ENCODE measurements at regions of chr9 and their contacts with region 1.

Region 1: DNA sequence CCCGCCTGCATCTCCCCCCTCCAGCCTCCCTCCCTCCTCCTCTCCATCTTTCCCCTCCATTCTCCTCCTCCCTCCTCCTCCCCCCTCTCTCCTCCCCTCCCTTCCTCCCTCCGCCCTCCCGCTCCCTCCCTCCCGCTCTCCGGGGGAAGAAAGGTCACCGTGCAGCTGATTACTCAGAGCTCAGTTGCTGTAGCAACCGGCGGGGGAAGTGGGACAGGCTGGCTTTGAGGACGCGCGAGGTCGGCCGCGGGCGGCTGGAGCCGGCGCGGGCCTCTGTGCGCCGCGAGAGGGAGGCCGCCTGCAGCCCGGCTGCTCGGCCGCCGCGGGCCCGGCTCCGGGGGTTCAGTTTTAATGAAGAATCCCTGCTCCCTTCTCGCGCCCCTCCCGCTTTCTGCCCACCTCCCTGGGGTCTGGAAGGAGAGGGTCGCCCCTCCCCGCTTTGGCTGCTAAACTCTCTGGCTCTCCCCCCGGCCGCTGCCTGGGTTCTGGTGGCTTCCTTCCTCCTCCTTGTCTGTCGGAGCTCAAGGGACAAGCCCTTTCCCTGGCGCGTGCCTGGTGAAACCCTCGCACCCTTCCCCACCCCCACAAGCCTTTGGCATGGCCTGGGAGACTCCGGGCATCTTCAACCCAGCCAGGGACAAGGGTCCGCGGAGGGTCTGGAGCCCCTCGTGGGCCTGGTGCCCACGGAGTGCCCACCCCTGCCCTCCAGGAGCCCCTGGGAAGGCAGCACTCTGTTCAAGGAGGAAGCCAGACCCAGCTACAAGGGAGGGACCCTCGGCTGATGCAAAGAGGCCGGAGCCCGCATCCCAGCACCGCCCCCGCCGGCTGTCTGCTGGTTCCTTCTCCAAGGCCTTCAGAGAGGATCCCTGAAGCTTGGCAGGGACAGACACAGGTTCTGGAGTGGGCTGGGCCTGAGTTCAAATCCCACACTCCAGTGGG is 160.3 kb downstream of the C9orf50 start:
- DNase-seq: peak; percentile 80 to 94 (median 84)
- H3K4me3 ChIP-seq: peak overlapping the region in 1 of 2 donors; percentile 47
- H3K4me3 Mint-ChIP-seq: peak overlapping the region; percentile 68 to 81 (median 76)
- H3K27ac ChIP-seq: peak overlapping the region; percentile 84
- H3K27ac Mint-ChIP-seq: peak overlapping the region; percentile 87 to 96 (median 93)
- H3K4me1 ChIP-seq: peaks cover 54% of the 10 kb centered on the region
- H3K4me1 Mint-ChIP-seq: peaks cover 29 to 53% (median 42%) of the 10 kb centered on the region in 4 donors
- H3K27me3 ChIP-seq: no peaks in the 10 kb centered on the region
- H3K27me3 Mint-ChIP-seq: no peaks in the 10 kb centered on the region

Region 2: GRCh38 chr9:129208207-129209032 is 252.2 kb before region 1 on chr9:
- CTCF ChIA-PET with region 1: no interaction called
- POLR2A ChIA-PET with region 1: no interaction called
- intact Hi-C with region 1: no loop called
- DNase-seq: no peak
- H3K4me3 ChIP-seq: no peak overlapping the region
- H3K4me3 Mint-ChIP-seq: peak overlapping the region in 5 of 8 donors; percentile 11 to 46 (median 20)
- H3K27ac ChIP-seq: no peak overlapping the region
- H3K27ac Mint-ChIP-seq: peak overlapping the region in 1 of 7 donors; percentile 32
- H3K4me1 ChIP-seq: peaks cover 30% of the 10 kb centered on the region
- H3K4me1 Mint-ChIP-seq: peaks cover 13 to 31% (median 19%) of the 10 kb centered on the region in 4 donors
- H3K27me3 ChIP-seq: no peaks in the 10 kb centered on the region
- H3K27me3 Mint-ChIP-seq: no peaks in the 10 kb centered on the region

Region 3: DNA sequence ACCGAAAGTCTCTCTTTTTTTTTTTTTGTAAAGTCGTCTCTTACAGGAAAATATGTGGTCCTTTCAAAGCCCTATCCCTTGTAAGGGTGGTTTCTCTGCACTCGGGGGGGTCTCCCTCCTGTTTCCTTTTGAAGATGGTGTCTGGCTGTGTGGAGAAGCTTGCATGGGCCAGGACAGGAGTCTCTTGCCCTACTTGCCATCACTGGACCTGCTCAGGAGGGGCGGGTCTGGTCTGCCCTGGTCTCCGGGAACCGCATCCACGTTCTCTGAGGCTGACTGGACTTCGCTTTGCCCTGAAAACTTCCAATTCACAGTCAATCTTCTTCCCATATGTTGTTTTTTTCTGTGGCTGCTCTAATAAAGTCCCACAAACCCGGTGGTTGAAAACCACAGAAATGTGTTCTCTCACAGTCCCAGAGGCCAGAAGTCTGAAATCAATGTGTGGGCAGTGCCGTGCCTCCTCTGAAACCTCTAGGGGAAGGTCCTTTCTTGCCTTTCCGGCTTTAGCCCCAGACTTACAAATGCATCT is 189.6 kb before region 1 on chr9:
- CTCF ChIA-PET with region 1: no interaction called
- POLR2A ChIA-PET with region 1: no interaction called
- intact Hi-C with region 1: no loop called
- DNase-seq: no peak
- H3K4me3 ChIP-seq: peak overlapping the region in 1 of 2 donors; percentile 15
- H3K4me3 Mint-ChIP-seq: peak overlapping the region; percentile 53 to 80 (median 68)
- H3K27ac ChIP-seq: no peak overlapping the region
- H3K27ac Mint-ChIP-seq: peak overlapping the region; percentile 14 to 81 (median 65)
- H3K4me1 ChIP-seq: peaks cover 21% of the 10 kb centered on the region
- H3K4me1 Mint-ChIP-seq: peaks cover 18 to 37% (median 26%) of the 10 kb centered on the region in 4 donors
- H3K27me3 ChIP-seq: no peaks in the 10 kb centered on the region
- H3K27me3 Mint-ChIP-seq: no peaks in the 10 kb centered on the region

Region 4: DNA sequence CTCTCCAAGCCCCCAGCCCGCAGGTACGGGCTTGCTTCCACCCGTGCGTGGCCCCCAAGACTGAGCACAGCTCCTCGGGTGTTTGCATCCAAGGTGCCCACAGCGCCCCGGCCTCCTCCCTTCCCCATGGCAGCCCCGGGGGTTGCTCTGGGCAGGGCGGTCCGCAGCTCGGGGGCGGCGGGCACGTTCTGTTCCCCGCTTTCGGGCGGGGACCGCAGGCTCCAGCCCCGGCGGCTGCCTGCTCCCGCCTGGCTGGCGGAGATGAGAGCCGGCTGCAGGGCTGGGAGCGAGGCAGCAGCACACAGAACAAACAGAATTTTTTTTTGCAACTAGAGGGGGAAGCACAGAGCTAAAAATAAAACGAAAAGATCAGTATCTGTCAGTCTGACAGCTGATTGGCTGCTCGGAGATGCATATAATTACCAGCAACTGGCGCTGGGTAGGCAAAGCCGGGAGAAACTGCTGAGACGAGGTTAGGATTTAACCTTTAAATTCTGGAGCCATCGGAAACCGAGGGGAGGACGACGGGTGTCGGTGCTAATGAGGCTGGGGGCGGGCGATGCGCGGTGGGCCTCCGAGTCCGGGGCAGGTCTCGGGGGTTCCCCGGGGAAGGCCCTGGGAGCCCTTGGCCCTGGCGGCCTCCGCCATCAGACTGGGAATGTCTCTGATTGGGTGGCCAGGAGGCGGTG is 139.9 kb before region 1 on chr9:
- CTCF ChIA-PET with region 1: no interaction called
- POLR2A ChIA-PET with region 1: interaction called, 11 read pairs
- intact Hi-C with region 1: no loop called
- DNase-seq: peak; percentile 63 to 74 (median 68)
- H3K4me3 ChIP-seq: peak overlapping the region in 1 of 2 donors; percentile 51
- H3K4me3 Mint-ChIP-seq: peak overlapping the region; percentile 62 to 90 (median 82)
- H3K27ac ChIP-seq: no peak overlapping the region
- H3K27ac Mint-ChIP-seq: peak overlapping the region in 6 of 7 donors; percentile 50 to 97 (median 78)
- H3K4me1 ChIP-seq: peaks cover 20% of the 10 kb centered on the region
- H3K4me1 Mint-ChIP-seq: peaks cover 5 to 20% (median 9%) of the 10 kb centered on the region in 4 donors
- H3K27me3 ChIP-seq: no peaks in the 10 kb centered on the region
- H3K27me3 Mint-ChIP-seq: peaks cover 0 to 1% of the 10 kb centered on the region in 2 donors

Region 5: DNA sequence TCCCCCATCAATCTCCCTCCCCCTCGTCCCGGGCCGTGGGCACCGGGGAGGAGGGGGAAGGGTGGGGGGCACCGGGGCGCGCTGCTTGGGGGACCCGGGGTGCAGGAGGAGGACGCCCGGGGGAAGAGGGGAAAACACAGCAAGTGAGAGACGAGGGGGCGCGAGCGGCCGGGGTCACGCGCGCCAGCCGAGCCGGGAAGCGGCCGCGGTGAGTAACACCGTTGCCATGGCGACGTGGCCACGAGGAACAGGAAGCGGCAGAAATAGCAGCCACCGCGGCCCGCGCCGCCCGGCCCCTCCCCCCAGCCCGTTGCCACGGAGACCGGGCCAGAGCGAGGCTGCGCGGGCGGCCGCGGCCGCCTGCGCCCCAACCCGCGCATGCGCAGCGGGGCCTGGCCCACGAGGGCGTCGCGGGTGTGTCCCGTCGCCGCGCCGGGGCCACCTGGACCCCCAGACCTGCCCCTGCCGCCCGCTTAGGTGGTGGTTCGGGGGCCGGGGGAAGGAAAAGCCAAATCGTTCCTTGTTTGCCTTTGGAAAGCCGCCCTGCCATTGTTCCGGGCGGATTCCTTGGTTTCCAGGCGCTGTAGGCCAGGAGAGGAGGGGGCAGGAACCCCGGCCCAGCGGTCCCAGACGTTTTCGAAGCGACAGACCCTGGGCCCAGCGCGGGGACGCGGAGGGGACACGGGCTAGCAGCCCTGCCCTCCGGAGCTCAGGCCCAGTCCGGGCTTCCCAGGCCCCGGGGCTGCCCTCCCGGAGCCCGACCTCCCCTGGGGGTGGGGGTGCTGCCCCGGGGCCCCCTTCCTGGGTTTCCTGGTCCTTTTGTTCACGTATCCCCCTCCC is 46.8 kb before region 1 on chr9:
- CTCF ChIA-PET with region 1: no interaction called
- POLR2A ChIA-PET with region 1: interaction called, 67 read pairs
- intact Hi-C with region 1: loop called (anchors 1 kb)
- DNase-seq: peak; percentile 96 to 99 (median 98)
- H3K4me3 ChIP-seq: peak overlapping the region; percentile 29 to 53
- H3K4me3 Mint-ChIP-seq: peak overlapping the region; percentile 82 to 91 (median 86)
- H3K27ac ChIP-seq: peak overlapping the region; percentile 97
- H3K27ac Mint-ChIP-seq: peak overlapping the region; percentile 96 to 99 (median 98)
- H3K4me1 ChIP-seq: peaks cover 27% of the 10 kb centered on the region
- H3K4me1 Mint-ChIP-seq: peaks cover 16 to 34% (median 24%) of the 10 kb centered on the region in 4 donors
- H3K27me3 ChIP-seq: no peaks in the 10 kb centered on the region
- H3K27me3 Mint-ChIP-seq: no peaks in the 10 kb centered on the region

Region 6: GRCh38 chr9:129482521-129483414 is 22.2 kb after region 1 on chr9:
- CTCF ChIA-PET with region 1: interaction called, 4 read pairs
- POLR2A ChIA-PET with region 1: interaction called, 85 read pairs
- intact Hi-C with region 1: no loop called
- DNase-seq: peak in 1 of 5 donors; percentile 38
- H3K4me3 ChIP-seq: peak overlapping the region in 1 of 2 donors; percentile 15
- H3K4me3 Mint-ChIP-seq: peak overlapping the region; percentile 55 to 81 (median 69)
- H3K27ac ChIP-seq: peak overlapping the region; percentile 62
- H3K27ac Mint-ChIP-seq: peak overlapping the region; percentile 57 to 93 (median 70)
- H3K4me1 ChIP-seq: peaks cover 31% of the 10 kb centered on the region
- H3K4me1 Mint-ChIP-seq: peaks cover 11 to 50% (median 25%) of the 10 kb centered on the region in 4 donors
- H3K27me3 ChIP-seq: no peaks in the 10 kb centered on the region
- H3K27me3 Mint-ChIP-seq: peaks cover 0 to 2% of the 10 kb centered on the region in 2 donors

Region 7: GRCh38 chr9:129495534-129496325 is 35.1 kb after region 1 on chr9:
- CTCF ChIA-PET with region 1: interaction called, 3 read pairs
- POLR2A ChIA-PET with region 1: interaction called, 50 read pairs
- intact Hi-C with region 1: loop called (anchors 1 kb)
- DNase-seq: peak; percentile 77 to 84 (median 78)
- H3K4me3 ChIP-seq: peak overlapping the region; percentile 51 to 84
- H3K4me3 Mint-ChIP-seq: peak overlapping the region; percentile 81 to 92 (median 86)
- H3K27ac ChIP-seq: peak overlapping the region; percentile 63
- H3K27ac Mint-ChIP-seq: peak overlapping the region; percentile 75 to 94 (median 91)
- H3K4me1 ChIP-seq: peaks cover 35% of the 10 kb centered on the region
- H3K4me1 Mint-ChIP-seq: peaks cover 18 to 49% (median 32%) of the 10 kb centered on the region in 4 donors
- H3K27me3 ChIP-seq: no peaks in the 10 kb centered on the region
- H3K27me3 Mint-ChIP-seq: no peaks in the 10 kb centered on the region

Region 8: DNA sequence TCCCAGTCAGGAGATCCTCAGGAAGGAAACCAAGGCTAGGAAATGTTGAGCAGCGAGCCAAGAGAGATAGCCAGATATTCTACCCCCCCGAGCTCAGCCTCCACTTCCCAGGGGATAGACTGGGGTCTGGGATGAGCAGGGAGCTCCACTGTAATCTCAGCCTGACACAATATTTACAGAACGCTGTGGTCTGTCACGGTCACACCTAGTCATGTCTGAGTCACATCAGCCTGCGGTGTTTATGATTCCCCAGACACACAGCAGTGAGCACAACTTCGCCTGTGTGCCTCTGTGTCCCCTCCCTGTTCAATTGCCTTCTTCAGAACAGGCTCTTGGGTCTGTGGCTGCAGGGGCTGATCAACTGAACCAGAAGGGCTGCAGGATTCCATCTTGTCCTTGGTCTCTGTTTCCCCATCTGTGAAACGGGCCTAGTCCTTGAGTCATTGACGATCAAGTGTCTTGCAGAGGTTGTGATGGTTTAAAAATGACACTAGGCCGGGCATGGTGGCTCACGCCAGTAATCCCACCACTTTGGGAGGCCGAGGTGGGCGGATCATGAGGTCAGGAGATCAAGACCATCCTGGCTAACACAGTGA is 196.3 kb after region 1 on chr9:
- CTCF ChIA-PET with region 1: no interaction called
- POLR2A ChIA-PET with region 1: no interaction called
- intact Hi-C with region 1: no loop called
- DNase-seq: no peak
- H3K4me3 ChIP-seq: no peak overlapping the region
- H3K4me3 Mint-ChIP-seq: no peak overlapping the region
- H3K27ac ChIP-seq: no peak overlapping the region
- H3K27ac Mint-ChIP-seq: no peak overlapping the region
- H3K4me1 ChIP-seq: no peaks in the 10 kb centered on the region
- H3K4me1 Mint-ChIP-seq: no peaks in the 10 kb centered on the region
- H3K27me3 ChIP-seq: no peaks in the 10 kb centered on the region
- H3K27me3 Mint-ChIP-seq: peaks cover 3 to 6% of the 10 kb centered on the region in 2 donors

Region 9: DNA sequence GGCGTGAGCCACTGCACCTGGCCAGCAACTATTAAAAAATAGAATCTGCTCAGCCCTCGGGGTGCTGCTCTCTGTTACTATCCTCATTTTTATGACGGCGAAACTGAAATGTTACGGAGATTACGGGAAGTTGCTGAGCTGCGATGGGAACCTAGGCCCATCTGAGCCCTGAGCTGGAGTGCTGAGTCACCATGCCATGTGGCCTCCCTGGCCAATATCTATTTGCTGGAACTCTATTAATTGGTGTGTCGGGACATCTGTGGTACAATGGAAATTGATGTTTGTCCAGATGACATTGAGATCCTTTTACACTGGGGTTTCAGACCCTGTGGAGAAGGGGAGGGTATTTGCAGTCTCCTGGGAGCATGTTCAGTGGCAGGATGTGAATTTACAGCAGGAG is 1211.9 kb after region 1 on chr9:
- CTCF ChIA-PET with region 1: no interaction called
- POLR2A ChIA-PET with region 1: no interaction called
- intact Hi-C with region 1: no loop called
- DNase-seq: no peak
- H3K4me3 ChIP-seq: no peak overlapping the region
- H3K4me3 Mint-ChIP-seq: no peak overlapping the region
- H3K27ac ChIP-seq: no peak overlapping the region
- H3K27ac Mint-ChIP-seq: no peak overlapping the region
- H3K4me1 ChIP-seq: no peaks in the 10 kb centered on the region
- H3K4me1 Mint-ChIP-seq: no peaks in the 10 kb centered on the region
- H3K27me3 ChIP-seq: no peaks in the 10 kb centered on the region
- H3K27me3 Mint-ChIP-seq: peaks cover 7 to 12% of the 10 kb centered on the region in 2 donors

Measured in CD4-positive, alpha-beta memory T cell (primary cell).